Right cardiac atrium (tissue), 5 donors: ENCODE measurements at regions of chr16 and their contacts with region 1.

Region 1: DNA sequence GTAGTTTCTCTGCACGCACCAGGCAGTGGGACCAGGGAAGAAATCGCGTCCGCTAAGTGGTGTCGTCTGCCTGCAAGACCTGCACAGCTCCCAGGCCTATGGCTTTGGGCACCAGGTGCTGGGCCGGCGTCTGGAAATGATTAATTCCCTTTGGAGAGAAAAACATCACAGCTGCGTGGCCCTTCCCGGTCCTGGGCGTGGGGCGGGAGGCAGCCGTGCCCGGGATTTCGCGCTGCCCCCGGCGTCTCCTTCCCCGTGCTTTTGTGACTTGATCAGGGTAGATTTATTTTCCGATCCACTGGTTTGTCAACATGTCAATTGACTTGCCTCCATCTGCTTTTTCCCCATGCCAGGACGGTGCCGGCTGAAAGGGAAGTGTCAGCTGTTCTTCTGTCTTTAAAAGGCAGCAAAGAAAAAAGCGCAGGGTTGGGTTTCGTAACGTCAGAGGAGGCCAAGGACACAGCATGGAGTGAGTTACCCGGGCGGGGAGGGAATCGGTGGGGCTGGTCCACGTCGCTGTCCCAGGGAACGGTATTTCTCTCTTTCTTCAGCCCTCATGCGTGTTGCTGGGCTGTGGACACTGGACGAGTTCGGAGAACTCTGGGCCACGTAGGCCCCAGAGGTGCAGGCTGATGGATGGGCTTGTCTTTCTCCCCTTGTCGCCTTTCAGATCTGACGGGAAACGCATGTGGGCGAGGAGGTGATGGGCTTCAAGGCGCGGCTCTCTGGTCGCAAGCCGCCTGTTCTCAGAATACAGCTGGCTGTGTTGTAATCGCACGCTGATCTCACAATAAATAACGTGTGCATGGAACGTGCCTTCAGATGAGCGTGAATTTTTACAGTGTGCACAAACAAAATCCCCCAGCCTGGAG is 188.1 kb upstream of the ZNF469 start:
- DNase-seq: no peak
- ATAC-seq: no peak
- H3K4me3 ChIP-seq: no peak overlapping the region
- H3K27ac ChIP-seq: no peak overlapping the region
- H3K4me1 ChIP-seq: no peaks in the 10 kb centered on the region
- H3K27me3 ChIP-seq: no peaks in the 10 kb centered on the region

Region 2: GRCh38 chr16:88383401-88384221 is 189.0 kb after region 1 on chr16:
- intact Hi-C with region 1: loop called in 1 of 4 experiments (anchors 10 kb)
- DNase-seq: peak; percentile 42 to 83 (median 76)
- ATAC-seq: peak in 1 of 2 donors; percentile 35
- H3K4me3 ChIP-seq: peak overlapping the region; percentile 50
- H3K27ac ChIP-seq: no peak overlapping the region
- H3K4me1 ChIP-seq: no peaks in the 10 kb centered on the region
- H3K27me3 ChIP-seq: no peaks in the 10 kb centered on the region

Region 3: GRCh38 chr16:88430524-88431446 is 236.2 kb after region 1 on chr16:
- intact Hi-C with region 1: loop called (anchors 5 to 10 kb)
- DNase-seq: peak in 2 of 3 donors; percentile 77 to 81
- ATAC-seq: peak in 1 of 2 donors; percentile 28
- H3K4me3 ChIP-seq: peak overlapping the region; percentile 61
- H3K27ac ChIP-seq: no peak overlapping the region
- H3K4me1 ChIP-seq: peaks cover 2% of the 10 kb centered on the region
- H3K27me3 ChIP-seq: no peaks in the 10 kb centered on the region

Region 4: GRCh38 chr16:88437373-88437964 is 242.8 kb after region 1 on chr16:
- intact Hi-C with region 1: loop called (anchors 5 to 10 kb)
- DNase-seq: peak; percentile 61 to 85 (median 80)
- ATAC-seq: peak; percentile 6 to 32
- H3K4me3 ChIP-seq: no peak overlapping the region
- H3K27ac ChIP-seq: no peak overlapping the region
- H3K4me1 ChIP-seq: no peaks in the 10 kb centered on the region
- H3K27me3 ChIP-seq: no peaks in the 10 kb centered on the region

Region 5: GRCh38 chr16:88527186-88527936 is 332.7 kb after region 1 on chr16:
- intact Hi-C with region 1: loop called in 1 of 4 experiments (anchors 10 kb)
- DNase-seq: peak; percentile 79 to 91 (median 89)
- ATAC-seq: peak; percentile 49 to 70
- H3K4me3 ChIP-seq: no peak overlapping the region
- H3K27ac ChIP-seq: no peak overlapping the region
- H3K4me1 ChIP-seq: no peaks in the 10 kb centered on the region
- H3K27me3 ChIP-seq: no peaks in the 10 kb centered on the region